ENCODE measurements at regions of chr19 and their contacts with region 1.

Region 1: DNA sequence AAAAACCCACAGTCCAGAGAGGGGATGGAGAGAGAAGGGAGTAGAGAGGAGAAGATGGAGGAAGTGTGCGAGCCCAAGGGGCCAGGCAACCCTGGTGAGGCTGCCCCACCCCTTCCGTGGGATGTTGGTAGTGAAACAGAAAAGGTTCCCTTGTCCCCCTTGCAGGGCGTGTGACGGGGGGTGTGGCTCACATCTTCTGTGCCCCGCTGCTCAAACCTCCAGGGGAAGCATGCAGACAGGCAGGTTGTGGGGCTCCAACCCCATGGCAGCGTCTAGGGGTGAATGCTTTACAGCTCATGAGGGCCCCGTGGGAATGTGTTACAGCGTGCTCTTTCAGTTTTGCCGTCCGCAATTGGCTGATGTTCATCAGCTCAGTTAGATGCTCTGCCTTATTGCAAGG is 14.7 kb upstream of the EVI5L start:
- DNase-seq: no peak
- ATAC-seq: no peak
- H3K4me3 ChIP-seq: no peak overlapping the region
- H3K27ac ChIP-seq: no peak overlapping the region
- H3K4me1 ChIP-seq: no peaks in the 10 kb centered on the region
- H3K27me3 ChIP-seq: peaks cover 0 to 11% (median 5%) of the 10 kb centered on the region in 3 donors
- CTCF ChIP-seq: no peak

Region 2: DNA sequence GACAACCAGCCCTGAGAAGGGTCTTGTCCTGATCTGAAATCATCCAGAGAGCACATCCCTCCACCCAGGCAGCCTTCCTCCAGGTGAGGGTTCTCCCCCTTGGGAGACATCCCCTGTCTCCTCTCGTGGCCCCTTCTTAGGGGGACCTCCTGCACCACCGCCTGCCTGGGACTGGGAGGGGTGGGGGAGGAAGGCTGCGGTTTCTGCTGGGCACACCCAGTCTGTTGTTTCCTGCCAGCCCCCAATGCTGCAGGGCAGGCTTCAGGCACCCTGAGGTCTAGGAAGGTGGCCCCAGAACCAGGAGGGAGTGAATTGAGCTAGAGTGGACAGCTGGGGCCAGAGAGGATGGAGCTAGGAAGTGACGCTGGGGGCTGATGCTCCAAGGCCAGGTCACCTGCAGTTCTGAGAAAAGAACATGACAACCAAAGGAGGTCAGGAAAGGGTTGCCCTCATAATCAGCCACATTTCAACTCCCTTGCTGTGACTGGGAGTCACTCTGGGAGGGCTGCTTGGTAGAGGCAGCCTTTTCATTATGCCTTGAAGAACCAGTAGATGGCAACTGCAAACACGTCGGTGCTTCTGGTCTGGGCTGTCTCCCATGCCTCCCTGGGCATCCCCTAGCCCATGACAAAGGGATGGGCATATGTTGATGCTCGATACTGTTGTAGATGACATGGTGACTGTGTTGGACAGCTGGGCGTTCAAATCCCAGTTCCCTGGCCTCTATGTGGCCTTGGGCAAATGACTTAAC is 465.2 kb before region 1 on chr19:
- intact Hi-C with region 1: loop called in 1 of 2 experiments (anchors 10 kb)
- DNase-seq: no peak
- ATAC-seq: no peak
- H3K4me3 ChIP-seq: no peak overlapping the region
- H3K27ac ChIP-seq: no peak overlapping the region
- H3K4me1 ChIP-seq: no peaks in the 10 kb centered on the region
- H3K27me3 ChIP-seq: peaks cover 0 to 4% (median 1%) of the 10 kb centered on the region in 3 donors
- CTCF ChIP-seq: no peak

Measured in psoas muscle (tissue), 8 donors.